ENCODE measurements at regions of chr12 and their contacts with region 1.

Region 1: DNA sequence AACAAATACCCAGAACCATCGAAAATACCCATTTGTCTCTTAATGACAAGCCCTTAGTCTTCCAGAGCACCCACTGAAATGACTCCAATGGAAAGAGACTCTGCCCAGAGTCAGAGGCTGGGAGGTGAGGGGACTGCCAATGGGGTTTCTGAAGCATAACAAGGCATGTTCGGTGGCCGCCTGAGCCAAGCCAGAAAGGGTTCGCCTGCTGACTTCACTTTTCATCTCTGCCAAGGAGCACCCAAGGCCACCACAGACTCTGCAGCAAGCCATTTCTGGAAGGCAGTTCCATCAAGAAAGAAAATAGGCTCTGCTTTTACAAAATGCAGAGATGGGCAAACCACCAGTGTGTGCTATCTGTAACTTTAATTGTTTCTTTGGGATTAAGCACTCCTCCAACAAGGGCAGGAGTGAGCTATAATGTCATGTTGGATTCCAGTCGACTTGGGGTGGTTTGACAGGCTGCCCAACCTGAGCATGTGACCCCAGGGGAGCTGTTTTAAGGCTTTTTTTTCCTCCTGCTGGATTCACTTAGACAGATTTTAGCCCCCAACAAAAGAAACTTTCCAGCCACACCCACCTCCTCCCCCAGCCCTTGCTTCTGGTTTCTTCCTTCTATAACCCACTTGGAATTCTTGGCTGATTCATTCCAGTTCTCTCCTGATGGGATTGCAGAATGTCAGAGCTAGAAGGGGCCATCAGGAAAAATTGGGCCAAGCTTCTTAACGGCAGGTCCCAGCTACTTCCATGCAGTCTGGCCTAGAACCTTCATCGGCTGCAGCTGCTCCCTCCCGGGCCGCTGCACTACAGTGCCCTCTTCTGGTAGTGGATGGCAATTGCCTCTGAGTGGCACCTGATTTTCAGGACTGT is 24.1 kb downstream of the CKAP4 start:
- DNase-seq: peak; percentile 88

Region 2: DNA sequence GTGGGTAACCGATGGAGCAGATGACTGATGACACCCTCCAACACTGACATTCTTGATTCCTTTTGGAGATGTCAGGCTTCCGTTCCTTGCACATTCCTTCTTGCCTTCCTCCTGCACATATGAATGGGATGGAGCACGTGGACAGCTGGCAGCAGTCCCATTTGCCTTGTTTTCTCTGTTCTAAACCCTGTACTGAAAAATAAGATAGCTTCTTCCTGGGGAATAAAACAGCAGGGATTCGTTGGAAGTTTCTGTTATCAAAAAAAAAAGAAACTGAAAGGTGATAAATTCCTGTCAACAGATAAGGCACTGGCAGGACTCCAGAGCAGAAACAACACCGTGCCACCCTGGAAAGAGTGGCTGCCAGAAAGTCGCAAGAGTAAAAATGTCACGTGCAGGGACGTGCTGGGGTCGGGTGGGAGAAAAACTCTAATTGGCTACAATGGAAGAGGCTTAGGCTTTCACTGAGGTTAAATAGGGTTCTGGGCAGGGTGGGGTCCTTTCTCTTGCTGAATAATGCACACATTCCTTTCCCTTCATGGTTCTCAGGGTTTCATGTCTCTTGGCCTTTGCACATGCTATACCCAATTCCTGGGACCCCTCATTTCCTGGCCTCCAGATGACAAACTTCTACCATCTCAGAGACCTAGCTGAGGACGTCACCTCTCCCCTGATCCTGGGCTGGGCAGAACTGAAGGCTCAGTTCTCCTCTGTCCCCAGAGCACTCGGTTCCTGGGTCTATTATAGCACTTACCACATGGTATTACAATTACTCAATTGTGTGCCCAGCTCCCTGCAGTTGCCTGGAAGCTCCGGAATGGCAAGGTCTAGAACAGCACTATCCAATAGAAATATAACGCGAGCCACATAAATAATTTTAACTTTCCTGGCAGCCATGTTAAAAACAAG is 77.9 kb before region 1 on chr12:
- CTCF ChIA-PET with region 1: interaction called, 13 read pairs
- POLR2A ChIA-PET with region 1: no interaction called
- DNase-seq: no peak

Region 3: DNA sequence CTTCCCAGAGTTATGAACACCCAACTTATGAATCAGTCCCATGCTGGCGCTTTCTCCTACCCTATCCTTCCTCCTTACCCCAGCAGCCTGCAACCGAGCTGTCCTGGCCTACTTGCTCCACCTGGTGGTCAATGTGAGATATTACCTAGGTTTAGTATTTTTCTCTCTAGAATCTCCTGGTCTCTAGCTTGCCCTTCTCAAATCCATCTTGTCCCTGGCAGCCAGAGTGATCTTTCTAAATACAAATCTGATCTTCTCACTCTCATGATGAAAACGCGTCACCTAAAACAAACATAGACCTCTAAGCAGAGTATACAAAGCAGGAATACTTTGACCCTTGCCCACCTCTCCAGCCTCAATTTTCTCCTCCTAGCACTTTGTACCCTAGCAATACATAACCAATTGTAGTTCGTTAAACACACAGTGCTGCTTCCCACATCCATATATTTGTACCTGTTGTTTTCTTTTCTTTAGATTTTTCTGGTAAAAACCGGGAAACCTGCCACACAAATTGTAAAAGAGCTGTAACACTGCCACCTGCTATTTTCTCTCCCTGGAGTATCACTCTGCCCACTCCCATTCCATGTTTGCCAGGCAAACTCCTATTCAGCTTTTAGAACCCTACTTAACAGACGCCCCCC is 58.9 kb after region 1 on chr12:
- CTCF ChIA-PET with region 1: interaction called, 25 read pairs
- POLR2A ChIA-PET with region 1: no interaction called
- DNase-seq: peak; percentile 72

Measured in HEK293T (cell line).